IMR-90 (cell line): ENCODE measurements at regions of chr12 and their contacts with region 1.

Region 1: GRCh38 chr12:105253882-105254513 is 18.0 kb upstream of the APPL2 start:
- DNase-seq: peak; percentile 73
- ATAC-seq: peak; percentile 54
- H3K4me3 ChIP-seq: no peak overlapping the region
- H3K27ac ChIP-seq: peak overlapping the region; percentile 89
- H3K4me1 ChIP-seq: peaks cover 39% of the 10 kb centered on the region
- H3K27me3 ChIP-seq: no peaks in the 10 kb centered on the region
- CTCF ChIP-seq: no peak
- POLR2A ChIP-seq: 0 out of 2 replicates have a peak, but pooled peaks have one; percentile 30
- RAD21 ChIP-seq: 0 out of 2 replicates have a peak, but pooled peaks have one; percentile 12

Region 2: GRCh38 chr12:105235732-105236476 is 18.1 kb before region 1 on chr12 and contains the start of gene APPL2:
- CTCF ChIA-PET with region 1: no interaction called
- POLR2A ChIA-PET with region 1: interaction called, 5 read pairs
- dilution Hi-C with region 1: no loop called
- in situ Hi-C with region 1: no loop called
- intact Hi-C with region 1: loop called (anchors 2 kb)
- DNase-seq: peak; percentile 87
- ATAC-seq: peak; percentile 94
- H3K4me3 ChIP-seq: peak within 1 kb of the TSS; percentile 93
- H3K27ac ChIP-seq: peak within 1 kb of the TSS; percentile 95
- H3K4me1 ChIP-seq: peaks cover 9% of the 10 kb centered on the region
- H3K27me3 ChIP-seq: no peaks in the 10 kb centered on the region
- CTCF ChIP-seq: peak; percentile 45
- POLR2A ChIP-seq: peak; percentile 79; the same call in 1 of the 2 replicates
- RAD21 ChIP-seq: peak; percentile 28
- total RNA-seq, gene APPL2: 42.3 and 53.3 TPM in 2 replicates